K562 (cell line): ENCODE measurements at regions of chr6 and their contacts with region 1.

Region 1: DNA sequence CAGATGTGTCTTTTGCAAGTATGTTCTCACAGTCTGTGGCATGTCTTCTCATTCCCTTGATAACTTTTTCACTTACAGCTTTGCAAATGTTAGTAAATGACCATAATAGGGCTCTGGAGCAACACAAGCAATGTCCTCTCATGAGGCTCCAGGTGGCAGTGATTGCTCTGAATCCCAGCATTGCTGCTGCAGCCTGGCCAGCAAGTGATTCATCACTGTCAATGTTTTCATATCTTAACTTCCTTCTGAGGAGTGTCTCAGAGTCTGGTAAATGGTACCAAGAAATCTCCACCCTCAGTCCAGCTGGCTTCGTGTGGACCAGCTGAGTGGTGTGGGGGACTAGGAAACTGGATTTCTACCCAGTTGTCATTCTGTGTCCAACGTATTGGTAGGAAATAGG is 139.6 kb downstream of the MYLK4 start:
- DNase-seq: no peak
- ATAC-seq: 0 out of 3 replicates have a peak, but pooled peaks have one; percentile 39
- H3K4me3 ChIP-seq: no peak overlapping the region
- H3K27ac ChIP-seq: no peak overlapping the region
- H3K4me1 ChIP-seq: no peaks in the 10 kb centered on the region
- H3K27me3 ChIP-seq: peaks cover 10% of the 10 kb centered on the region in 2 experiments; a peak in 4 of 5 replicates
- CTCF ChIP-seq: no peak
- EP300 ChIP-seq: no peak
- POLR2A ChIP-seq: no peak
- RAD21 ChIP-seq: no peak

Region 2: DNA sequence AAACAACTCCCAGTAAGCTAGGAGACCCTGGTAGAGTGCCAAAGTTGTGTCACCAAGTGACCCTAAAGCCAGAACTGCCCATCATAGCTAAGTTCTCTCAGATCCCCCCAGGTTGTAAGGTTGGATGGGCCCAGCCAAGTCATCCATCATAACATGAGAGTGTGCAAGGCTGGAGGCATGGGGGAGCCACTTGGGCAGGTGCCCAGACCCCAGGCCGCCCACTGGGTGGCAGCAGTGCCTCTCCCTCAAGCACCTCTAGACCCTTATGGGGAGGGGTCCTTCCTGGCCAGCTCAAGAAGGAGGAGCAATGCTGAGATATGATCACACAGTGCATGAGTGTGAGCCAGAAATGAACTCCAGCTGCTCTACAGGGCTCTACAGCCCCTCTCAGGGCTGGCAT is 14.9 kb before region 1 on chr6:
- CTCF ChIA-PET with region 1: no interaction called
- POLR2A ChIA-PET with region 1: no interaction called
- in situ Hi-C with region 1: no loop called
- intact Hi-C with region 1: loop called (anchors 1 kb)
- DNase-seq: peak in 1 of 4 experiments; percentile 31
- ATAC-seq: peak; percentile 66
- H3K4me3 ChIP-seq: no peak overlapping the region
- H3K27ac ChIP-seq: no peak overlapping the region
- H3K4me1 ChIP-seq: no peaks in the 10 kb centered on the region
- H3K27me3 ChIP-seq: peaks cover 0 to 25% of the 10 kb centered on the region in 2 experiments; a peak in 3 of 5 replicates
- CTCF ChIP-seq: peak; percentile 29 to 38 (median 34); a peak in 2 of 6 replicates
- EP300 ChIP-seq: no peak
- POLR2A ChIP-seq: no peak
- RAD21 ChIP-seq: peak in 1 of 2 experiments; percentile 47; a peak in 2 of 4 replicates